ENCODE measurements at regions of chr17 and their contacts with region 1.

Region 1: GRCh38 chr17:70034158-70034557 is 40.9 kb upstream of the KCNJ16 start:
- DNase-seq: peak; percentile 98
- H3K4me3 ChIP-seq: no peak overlapping the region
- H3K27ac ChIP-seq: peak overlapping the region; percentile 90
- H3K4me1 ChIP-seq: peaks cover 17% of the 10 kb centered on the region
- H3K27me3 ChIP-seq: no peaks in the 10 kb centered on the region
- CTCF ChIP-seq: no peak
- POLR2A ChIP-seq: peak; percentile 68

Region 2: GRCh38 chr17:69672924-69673323 is 361.2 kb before region 1 on chr17:
- CTCF ChIA-PET with region 1: no interaction called
- POLR2A ChIA-PET with region 1: no interaction called
- dilution Hi-C with region 1: no loop called
- intact Hi-C with region 1: loop called (anchors 1 kb)
- DNase-seq: peak; percentile 81
- H3K4me3 ChIP-seq: no peak overlapping the region
- H3K27ac ChIP-seq: peak overlapping the region; percentile 70
- H3K4me1 ChIP-seq: peaks cover 18% of the 10 kb centered on the region
- H3K27me3 ChIP-seq: no peaks in the 10 kb centered on the region
- CTCF ChIP-seq: no peak
- POLR2A ChIP-seq: peak; percentile 65

Region 3: GRCh38 chr17:69857412-69857835 is 176.7 kb before region 1 on chr17:
- CTCF ChIA-PET with region 1: no interaction called
- POLR2A ChIA-PET with region 1: no interaction called
- dilution Hi-C with region 1: no loop called
- intact Hi-C with region 1: loop called (anchors 1 kb)
- DNase-seq: peak; percentile 95
- H3K4me3 ChIP-seq: no peak overlapping the region
- H3K27ac ChIP-seq: peak overlapping the region; percentile 35
- H3K4me1 ChIP-seq: peaks cover 14% of the 10 kb centered on the region
- H3K27me3 ChIP-seq: no peaks in the 10 kb centered on the region
- CTCF ChIP-seq: no peak
- POLR2A ChIP-seq: peak; percentile 53

Region 4: GRCh38 chr17:69961501-69962145 is 72.5 kb before region 1 on chr17:
- CTCF ChIA-PET with region 1: no interaction called
- POLR2A ChIA-PET with region 1: no interaction called
- dilution Hi-C with region 1: no loop called
- intact Hi-C with region 1: no loop called
- DNase-seq: peak; percentile 6
- H3K4me3 ChIP-seq: no peak overlapping the region
- H3K27ac ChIP-seq: no peak overlapping the region
- H3K4me1 ChIP-seq: no peaks in the 10 kb centered on the region
- H3K27me3 ChIP-seq: no peaks in the 10 kb centered on the region
- CTCF ChIP-seq: no peak
- POLR2A ChIP-seq: no peak

Region 5: GRCh38 chr17:70123193-70123592 is 89.0 kb after region 1 on chr17:
- CTCF ChIA-PET with region 1: no interaction called
- POLR2A ChIA-PET with region 1: no interaction called
- dilution Hi-C with region 1: no loop called
- intact Hi-C with region 1: loop called (anchors 1 kb)
- DNase-seq: peak; percentile 56
- H3K4me3 ChIP-seq: no peak overlapping the region
- H3K27ac ChIP-seq: no peak overlapping the region
- H3K4me1 ChIP-seq: peaks cover 36% of the 10 kb centered on the region
- H3K27me3 ChIP-seq: no peaks in the 10 kb centered on the region
- CTCF ChIP-seq: no peak
- POLR2A ChIP-seq: no peak

Region 6: DNA sequence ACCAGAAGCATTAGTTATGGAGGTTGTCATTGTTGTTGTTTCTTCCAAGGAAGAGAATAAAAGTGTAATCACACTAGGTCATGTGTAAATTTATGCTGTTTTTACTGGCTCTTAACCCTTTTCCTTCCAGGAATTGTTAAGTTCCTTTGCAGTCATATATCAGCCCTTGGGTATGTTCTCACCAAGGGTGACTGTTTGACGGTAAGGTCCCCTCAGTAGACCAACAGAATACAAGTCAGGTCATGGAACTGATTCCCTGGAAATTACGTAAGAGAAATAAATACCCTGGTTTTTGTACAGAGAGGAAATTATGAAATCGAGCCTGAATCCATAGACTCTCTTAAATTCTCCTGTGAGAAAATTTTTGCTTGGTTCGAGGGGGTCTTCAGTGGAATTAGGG is 124.0 kb after region 1 on chr17:
- CTCF ChIA-PET with region 1: no interaction called
- POLR2A ChIA-PET with region 1: no interaction called
- dilution Hi-C with region 1: no loop called
- intact Hi-C with region 1: loop called (anchors 1 kb)
- DNase-seq: peak; percentile 97
- H3K4me3 ChIP-seq: peak overlapping the region; percentile 27 to 77 (median 47)
- H3K27ac ChIP-seq: peak overlapping the region; percentile 100
- H3K4me1 ChIP-seq: peaks cover 44% of the 10 kb centered on the region
- H3K27me3 ChIP-seq: no peaks in the 10 kb centered on the region
- CTCF ChIP-seq: no peak
- POLR2A ChIP-seq: no peak

Region 7: GRCh38 chr17:70447588-70447987 is 413.4 kb after region 1 on chr17:
- CTCF ChIA-PET with region 1: no interaction called
- POLR2A ChIA-PET with region 1: no interaction called
- dilution Hi-C with region 1: no loop called
- intact Hi-C with region 1: no loop called
- DNase-seq: no peak
- H3K4me3 ChIP-seq: no peak overlapping the region
- H3K27ac ChIP-seq: no peak overlapping the region
- H3K4me1 ChIP-seq: no peaks in the 10 kb centered on the region
- H3K27me3 ChIP-seq: no peaks in the 10 kb centered on the region
- CTCF ChIP-seq: no peak
- POLR2A ChIP-seq: no peak